ENCODE measurements at regions of chr11 and their contacts with region 1.

Region 1: DNA sequence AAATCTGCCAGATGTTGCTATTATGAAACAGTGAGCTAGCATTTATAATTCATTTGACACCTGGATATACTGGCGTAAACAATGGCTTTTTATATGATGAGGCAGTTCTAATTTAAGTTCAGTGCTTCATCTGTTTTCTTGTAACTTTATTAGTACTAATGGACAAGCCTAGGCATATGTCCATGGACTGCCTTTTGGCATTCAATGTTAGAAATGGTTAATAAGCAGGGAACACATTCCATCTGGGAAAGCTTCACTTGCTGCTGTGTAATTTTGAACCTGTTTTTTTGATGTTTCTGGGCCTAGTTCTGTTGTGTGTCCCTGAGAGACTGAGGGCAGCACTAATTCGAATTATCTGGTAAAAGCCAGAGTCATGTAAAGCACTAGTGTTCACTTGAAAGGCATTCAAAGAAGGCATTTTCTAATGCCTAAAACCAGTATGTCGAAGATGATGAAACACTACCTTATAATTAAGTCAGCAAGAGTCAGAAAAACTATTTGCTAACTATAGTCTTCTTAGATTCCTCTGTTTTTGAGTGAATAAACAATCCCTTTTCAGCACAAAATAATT is 138.5 kb downstream of the SWAP70 start:
- DNase-seq: no peak

Region 2: GRCh38 chr11:9170450-9170849 is 631.9 kb before region 1 on chr11:
- intact Hi-C with region 1: no loop called
- DNase-seq: no peak

Region 3: GRCh38 chr11:9341638-9342137 is 460.7 kb before region 1 on chr11:
- intact Hi-C with region 1: no loop called
- DNase-seq: no peak

Region 4: DNA sequence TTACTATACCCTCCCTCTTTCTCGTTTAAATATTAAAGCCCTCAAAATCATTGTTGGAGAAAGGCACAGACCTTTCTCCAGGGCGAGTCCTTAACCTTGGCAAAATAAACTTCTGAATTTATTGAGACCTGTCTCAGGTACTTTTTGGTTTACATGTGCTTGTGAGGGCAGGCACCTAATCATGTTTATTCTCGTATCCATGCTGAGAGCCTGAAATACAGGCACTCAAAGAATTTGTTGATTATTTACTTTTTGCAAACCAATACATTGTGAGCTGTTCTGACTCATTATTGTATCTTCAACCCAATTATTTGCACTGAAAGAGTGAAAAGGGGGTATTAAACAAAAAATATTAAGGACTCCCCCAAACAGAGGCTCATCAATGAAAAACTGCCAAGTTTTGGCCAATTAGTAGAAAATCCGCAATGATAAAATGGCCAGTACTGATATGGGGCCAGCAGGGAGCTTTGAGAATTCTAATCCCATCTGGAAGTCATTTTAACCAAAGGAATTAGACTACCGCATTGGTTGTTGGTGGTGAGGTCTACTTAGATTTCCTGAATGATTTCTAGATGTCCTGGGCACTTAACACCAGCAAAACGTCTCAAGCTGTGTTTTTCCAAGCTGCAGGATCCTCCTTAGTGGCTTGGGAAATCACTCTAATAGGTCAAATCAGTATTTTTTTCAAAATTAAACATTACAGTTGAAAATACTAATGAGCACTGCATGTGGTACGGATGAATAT is 18.8 kb after region 1 on chr11:
- intact Hi-C with region 1: loop called (anchors 1 kb)
- DNase-seq: no peak